ENCODE measurements at regions of chr3 and their contacts with region 1.

Region 1: GRCh38 chr3:50885070-50885850 is 210.5 kb downstream of the DOCK3 start:
- DNase-seq: peak in 1 of 2 experiments; percentile 61
- H3K4me3 ChIP-seq: no peak overlapping the region
- H3K27ac ChIP-seq: no peak overlapping the region
- H3K4me1 ChIP-seq: no peaks in the 10 kb centered on the region
- H3K27me3 ChIP-seq: no peaks in the 10 kb centered on the region
- CTCF ChIP-seq: peak; percentile 28 to 80 (median 77)
- EP300 ChIP-seq: no peak
- POLR2A ChIP-seq: no peak
- RAD21 ChIP-seq: peak; percentile 91 to 94

Region 2: DNA sequence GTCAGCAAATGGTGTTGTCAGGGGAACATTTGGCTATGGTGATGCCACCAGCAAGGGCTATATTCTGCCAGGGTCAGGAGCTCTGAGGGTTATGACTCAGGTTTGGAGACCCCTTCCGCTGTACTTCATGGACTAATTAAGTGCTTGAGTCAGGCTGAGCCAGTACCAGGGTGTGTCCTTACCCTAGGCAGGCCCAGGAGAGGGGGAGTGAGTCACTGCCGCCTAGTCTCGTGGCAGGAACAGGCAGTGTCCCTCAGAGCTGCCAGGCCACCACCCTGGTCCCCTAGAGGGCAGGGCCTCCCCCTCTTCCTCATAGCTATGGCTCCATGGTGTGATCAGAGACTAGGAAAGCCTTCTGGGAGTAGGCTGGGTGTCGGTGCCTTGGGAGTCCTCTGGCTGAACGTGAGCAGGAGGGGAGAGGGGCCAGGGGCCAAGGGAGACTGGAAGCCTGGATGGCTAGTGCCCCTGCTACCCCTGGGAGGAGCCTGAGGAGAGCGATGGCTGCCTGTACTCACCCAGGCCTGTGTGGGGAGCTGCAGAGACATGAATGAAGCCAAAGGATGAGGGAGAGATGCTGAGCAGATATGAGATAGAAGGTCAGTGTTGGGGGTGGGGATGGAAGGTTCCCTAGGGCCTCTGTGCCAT is 257.7 kb before region 1 on chr3:
- CTCF ChIA-PET with region 1: interaction called, 12 read pairs
- POLR2A ChIA-PET with region 1: interaction called, 3 read pairs
- DNase-seq: no peak
- H3K4me3 ChIP-seq: no peak overlapping the region
- H3K27ac ChIP-seq: peak overlapping the region; percentile 32; the same call in 1 of the 2 replicates
- H3K4me1 ChIP-seq: peaks cover 2 to 21% (median 12%) of the 10 kb centered on the region in 4 experiments
- H3K27me3 ChIP-seq: no peaks in the 10 kb centered on the region
- CTCF ChIP-seq: peak in 2 of 3 experiments; percentile 79 to 82; a peak in 3 of 4 replicates
- EP300 ChIP-seq: no peak
- POLR2A ChIP-seq: no peak
- RAD21 ChIP-seq: peak; percentile 90 to 91

Region 3: GRCh38 chr3:50674349-50675178 is 210.7 kb before region 1 on chr3 and contains the start of gene DOCK3:
- CTCF ChIA-PET with region 1: interaction called, 24 read pairs
- POLR2A ChIA-PET with region 1: interaction called, 3 read pairs
- DNase-seq: peak in 1 of 2 experiments; percentile 72
- H3K4me3 ChIP-seq: peak within 1 kb of the TSS; percentile 51 to 81 (median 62)
- H3K27ac ChIP-seq: peak within 1 kb of the TSS; percentile 34; the same call in 1 of the 2 replicates
- H3K4me1 ChIP-seq: peaks cover 4 to 10% (median 6%) of the 10 kb centered on the region in 4 experiments
- H3K27me3 ChIP-seq: peaks cover 0 to 16% (median 14%) of the 10 kb centered on the region in 4 experiments; a peak in 6 of 7 replicates
- CTCF ChIP-seq: no peak
- EP300 ChIP-seq: no peak
- POLR2A ChIP-seq: 0 out of 3 replicates have a peak, but pooled peaks of 1 of the 2 experiments have one; percentile 16
- RAD21 ChIP-seq: no peak
- total RNA-seq, gene DOCK3: 4.6 and 5.0 TPM in 2 replicates

Region 4: DNA sequence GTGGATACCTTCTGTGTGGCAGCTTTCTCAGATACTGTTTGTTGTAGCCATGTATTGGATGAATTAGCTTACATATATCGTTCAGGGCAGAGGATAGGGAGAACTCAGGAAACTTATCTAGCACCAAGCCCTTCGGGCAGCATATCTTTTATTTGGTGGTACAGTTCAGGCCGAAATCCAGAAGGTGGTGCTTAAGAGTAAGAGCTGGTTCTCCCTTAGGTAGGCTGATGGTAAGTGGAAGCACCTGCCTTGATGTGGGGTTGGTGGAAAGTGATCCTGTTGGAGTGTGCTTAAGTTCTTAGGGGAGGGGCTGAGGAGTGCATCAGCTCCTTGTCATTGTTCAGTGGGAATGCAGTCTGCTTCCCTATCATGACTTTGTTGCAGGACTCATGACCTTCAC is 23.0 kb before region 1 on chr3:
- CTCF ChIA-PET with region 1: interaction called, 10 read pairs
- POLR2A ChIA-PET with region 1: no interaction called
- DNase-seq: peak in 1 of 2 experiments; percentile 10
- H3K4me3 ChIP-seq: no peak overlapping the region
- H3K27ac ChIP-seq: no peak overlapping the region
- H3K4me1 ChIP-seq: no peaks in the 10 kb centered on the region
- H3K27me3 ChIP-seq: no peaks in the 10 kb centered on the region
- CTCF ChIP-seq: peak in 2 of 3 experiments; percentile 50 to 55; a peak in 3 of 4 replicates
- EP300 ChIP-seq: no peak
- POLR2A ChIP-seq: no peak
- RAD21 ChIP-seq: peak; percentile 58 to 68

Region 5: GRCh38 chr3:50873376-50874157 is 11.7 kb before region 1 on chr3:
- CTCF ChIA-PET with region 1: interaction called, 12 read pairs
- POLR2A ChIA-PET with region 1: no interaction called
- DNase-seq: no peak
- H3K4me3 ChIP-seq: no peak overlapping the region
- H3K27ac ChIP-seq: no peak overlapping the region
- H3K4me1 ChIP-seq: peaks cover 0 to 6% (median 3%) of the 10 kb centered on the region in 4 experiments; a peak in 4 of 7 replicates
- H3K27me3 ChIP-seq: no peaks in the 10 kb centered on the region
- CTCF ChIP-seq: no peak
- EP300 ChIP-seq: no peak
- POLR2A ChIP-seq: no peak
- RAD21 ChIP-seq: no peak

Region 6: GRCh38 chr3:50961386-50961785 is 76.1 kb after region 1 on chr3:
- CTCF ChIA-PET with region 1: no interaction called
- POLR2A ChIA-PET with region 1: no interaction called
- DNase-seq: no peak
- H3K4me3 ChIP-seq: no peak overlapping the region
- H3K27ac ChIP-seq: no peak overlapping the region
- H3K4me1 ChIP-seq: no peaks in the 10 kb centered on the region
- H3K27me3 ChIP-seq: peaks cover 0 to 1% (median 0%) of the 10 kb centered on the region in 4 experiments; a peak in 1 of 7 replicates
- CTCF ChIP-seq: no peak
- EP300 ChIP-seq: no peak
- POLR2A ChIP-seq: no peak
- RAD21 ChIP-seq: no peak

Region 7: GRCh38 chr3:51031666-51032065 is 146.4 kb after region 1 on chr3:
- CTCF ChIA-PET with region 1: no interaction called
- POLR2A ChIA-PET with region 1: no interaction called
- DNase-seq: no peak
- H3K4me3 ChIP-seq: no peak overlapping the region
- H3K27ac ChIP-seq: no peak overlapping the region
- H3K4me1 ChIP-seq: no peaks in the 10 kb centered on the region
- H3K27me3 ChIP-seq: no peaks in the 10 kb centered on the region
- CTCF ChIP-seq: no peak
- EP300 ChIP-seq: no peak
- POLR2A ChIP-seq: no peak
- RAD21 ChIP-seq: no peak

Region 8: DNA sequence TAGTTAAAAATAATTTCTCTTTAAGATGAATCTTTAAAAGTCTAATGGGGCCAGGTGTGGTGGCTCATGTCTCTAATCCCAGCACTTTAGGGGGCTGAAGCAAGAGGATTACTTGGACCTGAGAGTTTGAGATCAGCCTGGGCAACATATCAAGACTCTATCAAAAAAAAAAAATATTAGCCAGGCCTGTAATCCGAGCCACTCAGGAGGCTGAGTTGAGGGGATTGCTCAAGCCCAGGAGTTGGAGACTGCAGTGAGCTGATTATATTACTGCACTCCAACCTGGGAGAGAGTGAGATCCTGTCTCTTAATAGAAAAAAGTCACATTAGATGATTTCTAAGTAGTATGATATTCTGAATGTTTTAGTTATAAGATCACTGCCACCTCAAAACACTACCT is 177.8 kb after region 1 on chr3:
- CTCF ChIA-PET with region 1: no interaction called
- POLR2A ChIA-PET with region 1: no interaction called
- DNase-seq: no peak
- H3K4me3 ChIP-seq: no peak overlapping the region
- H3K27ac ChIP-seq: no peak overlapping the region
- H3K4me1 ChIP-seq: no peaks in the 10 kb centered on the region
- H3K27me3 ChIP-seq: no peaks in the 10 kb centered on the region
- CTCF ChIP-seq: no peak
- EP300 ChIP-seq: no peak
- POLR2A ChIP-seq: no peak
- RAD21 ChIP-seq: no peak

Region 9: DNA sequence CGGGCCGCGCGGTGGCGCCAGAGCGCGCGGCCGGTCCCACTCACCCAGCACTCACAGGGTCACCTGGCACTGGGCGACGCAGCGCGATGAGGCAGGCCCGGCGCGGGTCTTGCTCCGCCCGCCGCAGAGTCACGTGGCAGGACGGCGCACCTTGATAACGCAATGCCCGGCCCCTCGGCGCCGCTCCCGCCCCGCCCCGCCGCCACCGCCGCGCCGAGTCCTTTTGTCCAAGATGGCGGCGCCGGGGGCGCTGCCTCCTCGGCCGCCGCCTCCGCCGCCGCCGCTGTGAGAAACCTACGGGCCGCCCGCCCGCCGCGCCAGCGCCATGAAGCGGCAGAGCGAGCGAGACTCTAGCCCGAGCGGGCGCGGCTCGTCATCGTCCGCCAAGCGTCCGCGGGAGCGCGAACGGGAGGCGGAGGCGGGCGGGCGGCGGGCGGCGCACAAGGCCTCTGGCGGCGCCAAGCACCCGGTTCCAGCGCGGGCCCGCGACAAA is 505.9 kb after region 1 on chr3 and contains the start of gene RBM15B:
- CTCF ChIA-PET with region 1: no interaction called
- POLR2A ChIA-PET with region 1: no interaction called
- DNase-seq: peak; percentile 93 to 98
- H3K4me3 ChIP-seq: peak within 1 kb of the TSS; percentile 75 to 90 (median 82)
- H3K27ac ChIP-seq: peak within 1 kb of the TSS; percentile 81
- H3K4me1 ChIP-seq: peaks cover 4 to 30% (median 17%) of the 10 kb centered on the region in 4 experiments
- H3K27me3 ChIP-seq: no peaks in the 10 kb centered on the region
- CTCF ChIP-seq: peak in 1 of 3 experiments; percentile 84; a peak in 2 of 4 replicates
- EP300 ChIP-seq: peak in 1 of 2 experiments; percentile 83; a peak in 1 of 3 replicates
- POLR2A ChIP-seq: peak in 1 of 2 experiments; percentile 94; a peak in 2 of 3 replicates
- RAD21 ChIP-seq: peak; percentile 57 to 62; a peak in 3 of 4 replicates
- total RNA-seq, gene RBM15B: 59.1 and 60.9 TPM in 2 replicates

Measured in H1 (cell line).